ENCODE measurements at regions of chr9 and their contacts with region 1.

Region 1: DNA sequence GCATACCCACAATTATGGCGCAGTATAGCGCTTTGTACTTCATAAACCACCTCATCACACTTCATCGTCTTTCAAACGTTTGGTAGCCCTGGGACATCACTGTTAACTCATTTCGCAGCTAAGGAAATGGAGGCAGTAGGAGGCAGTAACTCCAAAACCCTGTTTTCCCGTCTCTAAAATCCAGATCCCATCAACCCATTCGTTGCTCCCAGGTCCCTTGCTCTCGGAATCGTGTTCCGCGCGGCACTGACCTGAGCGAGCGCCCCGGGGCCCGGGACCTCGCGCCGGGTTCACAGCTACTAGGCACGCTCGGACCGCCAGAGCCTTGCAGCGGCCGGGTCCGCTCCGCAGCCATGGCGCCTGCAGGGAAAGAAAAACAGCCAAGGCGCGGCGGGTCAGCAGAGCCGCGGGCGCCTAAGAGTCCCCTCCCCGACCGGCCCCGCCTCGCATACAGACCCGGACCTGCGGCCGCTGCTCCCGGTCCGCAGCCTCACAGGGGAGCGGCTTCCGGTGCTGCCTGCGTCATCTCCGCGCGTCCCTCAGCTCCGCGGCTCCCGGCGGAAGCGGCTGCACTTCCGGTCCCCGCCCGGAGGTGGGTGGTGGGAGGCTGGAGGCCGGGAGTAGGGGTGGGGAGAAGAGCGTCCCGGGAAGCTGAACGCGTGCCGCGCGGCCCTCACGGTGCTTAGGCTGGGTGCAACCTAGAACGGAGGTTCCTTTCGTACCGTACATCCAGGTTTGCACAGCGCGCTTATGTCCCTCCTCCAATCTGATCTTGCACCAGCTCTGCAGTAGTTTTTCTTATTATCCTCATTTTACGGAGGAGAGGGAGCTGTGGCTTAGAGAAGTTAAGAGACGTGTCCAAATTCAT is at the start of gene FBXW2:
- DNase-seq: peak; percentile 86
- H3K4me3 Mint-ChIP-seq: peak within 1 kb of the TSS; percentile 87
- H3K27ac Mint-ChIP-seq: peak within 1 kb of the TSS; percentile 91
- H3K4me1 Mint-ChIP-seq: peaks cover 40% of the 10 kb centered on the region
- H3K27me3 Mint-ChIP-seq: no peaks in the 10 kb centered on the region
- total RNA-seq, gene FBXW2: 79.7 and 80.2 TPM in 2 replicates

Region 2: GRCh38 chr9:120579750-120580590 is 213.2 kb before region 1 on chr9 and contains the start of gene CDK5RAP2:
- intact Hi-C with region 1: loop called (anchors 1 kb)
- DNase-seq: peak; percentile 91
- H3K4me3 Mint-ChIP-seq: peak within 1 kb of the TSS; percentile 97
- H3K27ac Mint-ChIP-seq: peak within 1 kb of the TSS; percentile 93
- H3K4me1 Mint-ChIP-seq: peaks cover 41% of the 10 kb centered on the region
- H3K27me3 Mint-ChIP-seq: no peaks in the 10 kb centered on the region
- total RNA-seq, gene CDK5RAP2: 59.8 and 60.7 TPM in 2 replicates

Region 3: GRCh38 chr9:120757026-120757913 is 35.9 kb before region 1 on chr9:
- intact Hi-C with region 1: no loop called
- DNase-seq: no peak
- H3K4me3 Mint-ChIP-seq: no peak overlapping the region
- H3K27ac Mint-ChIP-seq: no peak overlapping the region
- H3K4me1 Mint-ChIP-seq: peaks cover 10% of the 10 kb centered on the region
- H3K27me3 Mint-ChIP-seq: no peaks in the 10 kb centered on the region

Region 4: DNA sequence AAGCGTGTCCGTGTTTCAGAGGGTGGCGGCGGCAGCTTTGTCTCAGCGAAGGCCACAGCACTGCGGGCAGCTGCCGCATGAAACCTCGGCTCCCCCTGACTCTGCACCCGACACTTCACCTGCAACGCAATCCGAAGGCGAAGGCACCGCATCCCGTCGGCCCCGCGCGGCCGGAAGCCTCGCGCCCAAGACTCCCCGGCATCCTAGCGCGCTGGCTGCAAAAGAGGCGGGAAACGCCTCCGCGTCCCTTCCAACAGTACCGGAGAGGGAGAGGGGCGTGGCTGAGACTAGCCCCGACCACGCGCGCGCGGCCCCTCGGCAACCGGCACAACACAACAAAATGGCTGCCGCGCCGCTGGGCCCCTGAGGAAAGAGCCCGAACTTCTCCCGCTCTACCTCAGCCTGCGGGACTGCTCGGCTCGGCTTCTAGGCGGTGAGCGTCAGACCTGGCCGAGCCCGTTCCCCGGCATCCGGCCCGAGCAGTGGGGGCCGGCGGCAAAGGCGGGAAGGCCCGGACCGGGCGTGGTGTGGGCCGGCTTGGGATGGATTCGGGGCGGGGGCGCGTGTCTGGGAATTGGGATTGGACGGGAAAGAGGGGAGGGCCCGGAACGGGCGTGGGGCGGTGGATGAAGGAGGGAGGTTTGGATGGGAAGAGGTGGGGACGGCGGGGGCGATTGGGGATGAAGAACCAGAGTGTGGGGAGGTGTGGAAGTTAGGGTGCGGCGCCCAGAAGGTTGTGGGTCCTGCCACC is 281.7 kb after region 1 on chr9 and contains the start of gene CNTRL:
- intact Hi-C with region 1: loop called (anchors 1 kb)
- DNase-seq: peak; percentile 90
- H3K4me3 Mint-ChIP-seq: peak within 1 kb of the TSS; percentile 100
- H3K27ac Mint-ChIP-seq: peak within 1 kb of the TSS; percentile 98
- H3K4me1 Mint-ChIP-seq: peaks cover 34% of the 10 kb centered on the region
- H3K27me3 Mint-ChIP-seq: no peaks in the 10 kb centered on the region
- total RNA-seq, gene CNTRL: 67.6 and 68.4 TPM in 2 replicates